Aorta (tissue), 5 donors: ENCODE measurements at regions of chr14 and their contacts with region 1.

Region 1: DNA sequence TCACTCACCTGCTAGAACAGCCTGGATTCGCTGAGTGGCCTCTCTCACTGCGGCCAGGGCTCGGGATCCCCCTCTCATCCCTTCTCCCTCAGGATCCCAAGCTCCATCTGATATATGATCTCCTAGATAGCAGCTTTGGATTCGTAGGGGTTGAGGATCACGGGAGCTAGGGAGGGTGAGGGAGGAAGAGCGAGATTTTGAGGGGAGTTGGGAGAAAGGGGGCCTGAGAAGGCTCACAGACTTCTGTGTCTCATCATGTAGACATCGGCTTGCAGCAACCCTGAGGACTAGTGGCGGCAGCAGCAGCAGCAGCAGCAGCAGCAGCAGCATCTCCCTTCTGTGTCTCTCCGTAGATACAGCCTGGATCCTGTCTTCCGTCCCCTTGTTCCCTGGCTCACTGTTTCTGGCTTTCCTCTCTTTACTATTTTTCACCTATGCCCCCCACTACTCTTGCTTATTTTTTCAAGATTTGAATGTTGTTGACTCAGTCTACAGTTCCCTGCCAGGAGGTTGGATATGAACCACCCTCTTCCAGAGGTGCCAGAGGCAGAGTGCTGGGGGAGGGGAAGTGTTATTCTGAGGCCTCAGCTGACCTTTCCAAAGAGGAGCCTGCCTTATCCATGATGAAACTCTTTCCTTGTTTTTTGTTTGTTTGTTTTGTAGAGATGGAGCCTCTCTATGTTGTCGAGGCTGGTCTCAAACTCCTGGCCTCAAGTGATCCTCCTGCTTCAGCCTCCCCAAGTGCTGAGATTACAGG is at the start of gene CIROP:
- DNase-seq: peak; percentile 12 to 24
- ATAC-seq: no peak
- H3K4me3 ChIP-seq: no peak within 1 kb of the TSS
- H3K27ac ChIP-seq: no peak within 1 kb of the TSS
- H3K4me1 ChIP-seq: no peaks in the 10 kb centered on the region
- H3K27me3 ChIP-seq: no peaks in the 10 kb centered on the region
- total RNA-seq, gene CIROP: 0.18 TPM in 1 of 2 donors, not detected in the other

Region 2: GRCh38 chr14:23068476-23069412 is 36.0 kb before region 1 on chr14:
- intact Hi-C with region 1: loop called in 1 of 2 experiments (anchors 5 kb)
- DNase-seq: peak; percentile 79 to 82
- ATAC-seq: peak; percentile 88
- H3K4me3 ChIP-seq: no peak overlapping the region
- H3K27ac ChIP-seq: no peak overlapping the region
- H3K4me1 ChIP-seq: no peaks in the 10 kb centered on the region
- H3K27me3 ChIP-seq: no peaks in the 10 kb centered on the region